GM12878 (cell line): ENCODE measurements at regions of chr11 and their contacts with region 1.

Region 1: GRCh38 chr11:61899146-61899841 is 7.9 kb upstream of the FADS3 start:
- DNase-seq: peak; percentile 40
- ATAC-seq: peak; percentile 95
- H3K4me3 ChIP-seq: no peak overlapping the region
- H3K27ac ChIP-seq: no peak overlapping the region
- H3K4me1 ChIP-seq: no peaks in the 10 kb centered on the region
- H3K27me3 ChIP-seq: peaks cover 0 to 1% of the 10 kb centered on the region in 2 experiments; a peak in 1 of 4 replicates
- CTCF ChIP-seq: peak; percentile 99 to 100 (median 99)
- EP300 ChIP-seq: no peak
- POLR2A ChIP-seq: no peak
- RAD21 ChIP-seq: peak; percentile 85

Region 2: DNA sequence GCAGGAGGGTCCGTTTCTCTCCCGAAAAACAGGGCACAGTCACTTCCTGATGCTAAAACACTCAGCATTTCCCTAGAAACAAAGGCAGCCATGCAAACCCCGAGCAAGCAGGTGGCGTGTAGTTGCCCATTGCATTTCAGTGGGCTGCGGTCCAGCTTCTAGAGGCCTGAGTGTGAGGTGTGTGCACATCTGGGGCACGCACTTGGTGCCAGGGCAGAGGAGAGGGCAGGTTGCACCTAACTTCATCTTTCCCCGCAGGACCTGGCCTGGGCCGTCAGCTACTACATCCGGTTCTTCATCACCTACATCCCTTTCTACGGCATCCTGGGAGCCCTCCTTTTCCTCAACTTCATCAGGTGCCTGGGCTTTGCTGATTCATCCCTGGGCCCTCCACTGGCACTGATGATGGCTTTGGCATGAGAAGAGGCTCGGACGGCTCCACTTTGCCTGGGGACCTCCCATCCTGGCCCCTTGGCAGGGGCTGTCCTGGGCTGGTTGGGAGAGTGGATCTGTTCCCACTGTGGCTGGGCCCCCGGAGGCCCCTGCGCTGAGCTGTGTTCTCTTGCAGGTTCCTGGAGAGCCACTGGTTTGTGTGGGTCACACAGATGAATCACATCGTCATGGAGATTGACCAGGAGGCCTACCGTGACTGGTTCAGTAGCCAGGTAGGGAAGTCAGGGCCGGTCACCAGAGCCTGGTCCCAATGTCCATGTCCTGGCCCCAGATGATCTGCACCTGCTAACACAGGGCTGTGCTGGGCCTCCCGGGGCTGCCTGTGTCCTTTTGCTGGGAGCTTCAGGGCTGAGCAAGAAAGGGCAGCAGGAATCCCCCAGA is 36.4 kb before region 1 on chr11:
- CTCF ChIA-PET with region 1: no interaction called
- POLR2A ChIA-PET with region 1: no interaction called
- RAD21 ChIA-PET with region 1: no interaction called
- SMC1A ChIA-PET with region 1: no interaction called
- in situ Hi-C with region 1: no loop called
- intact Hi-C with region 1: no loop called
- DNase-seq: no peak
- ATAC-seq: no peak
- H3K4me3 ChIP-seq: no peak overlapping the region
- H3K27ac ChIP-seq: no peak overlapping the region
- H3K4me1 ChIP-seq: no peaks in the 10 kb centered on the region
- H3K27me3 ChIP-seq: no peaks in the 10 kb centered on the region
- CTCF ChIP-seq: no peak
- EP300 ChIP-seq: no peak
- POLR2A ChIP-seq: peak; percentile 16; the same call in 1 of the 2 replicates
- RAD21 ChIP-seq: no peak

Region 3: GRCh38 chr11:61881397-61881796 is 17.9 kb before region 1 on chr11:
- CTCF ChIA-PET with region 1: interaction called, 38 read pairs
- POLR2A ChIA-PET with region 1: no interaction called
- RAD21 ChIA-PET with region 1: interaction called, 3 read pairs
- SMC1A ChIA-PET with region 1: interaction called, 3 read pairs
- in situ Hi-C with region 1: no loop called
- intact Hi-C with region 1: no loop called
- DNase-seq: no peak
- ATAC-seq: peak; percentile 43
- H3K4me3 ChIP-seq: no peak overlapping the region
- H3K27ac ChIP-seq: no peak overlapping the region
- H3K4me1 ChIP-seq: peaks cover 22% of the 10 kb centered on the region
- H3K27me3 ChIP-seq: no peaks in the 10 kb centered on the region; a peak in 1 of 4 replicates
- CTCF ChIP-seq: no peak
- EP300 ChIP-seq: no peak
- POLR2A ChIP-seq: no peak
- RAD21 ChIP-seq: no peak

Region 4: GRCh38 chr11:61935861-61936260 is 36.6 kb after region 1 on chr11:
- CTCF ChIA-PET with region 1: interaction called, 10 read pairs
- POLR2A ChIA-PET with region 1: no interaction called
- RAD21 ChIA-PET with region 1: no interaction called
- SMC1A ChIA-PET with region 1: no interaction called
- in situ Hi-C with region 1: no loop called
- intact Hi-C with region 1: no loop called
- DNase-seq: no peak
- ATAC-seq: no peak
- H3K4me3 ChIP-seq: no peak overlapping the region
- H3K27ac ChIP-seq: no peak overlapping the region
- H3K4me1 ChIP-seq: no peaks in the 10 kb centered on the region
- H3K27me3 ChIP-seq: no peaks in the 10 kb centered on the region; a peak in 2 of 4 replicates
- CTCF ChIP-seq: no peak
- EP300 ChIP-seq: no peak
- POLR2A ChIP-seq: no peak
- RAD21 ChIP-seq: no peak

Region 5: DNA sequence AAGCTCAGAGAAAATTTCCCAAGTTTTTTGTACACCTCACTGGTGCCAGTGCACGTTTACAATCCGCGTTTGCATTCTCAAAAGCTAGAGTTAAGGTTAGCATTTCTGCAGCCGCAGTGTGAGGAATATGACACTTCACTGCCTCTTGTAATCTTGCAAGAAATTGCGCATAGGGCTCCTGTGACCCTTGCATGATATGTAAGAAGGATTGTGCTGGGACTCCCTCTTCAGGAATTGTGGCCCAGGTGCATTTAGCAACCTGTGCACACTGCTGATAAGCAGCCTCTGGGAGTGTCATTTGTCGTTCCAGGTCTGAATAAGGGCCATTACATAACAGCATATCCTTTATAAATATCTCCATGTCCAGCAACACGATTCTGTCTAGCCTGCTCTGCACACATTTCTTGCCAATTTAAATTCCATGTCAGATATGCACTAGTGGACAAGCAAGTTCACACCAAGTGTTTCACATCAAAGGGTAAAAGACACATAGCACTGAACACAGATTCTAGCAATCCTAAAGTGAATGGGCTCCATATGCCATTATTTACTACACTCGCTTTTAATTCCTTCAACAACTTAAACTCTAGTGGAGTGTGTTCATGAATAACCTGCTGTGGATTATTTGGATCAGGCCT is 155.3 kb after region 1 on chr11:
- CTCF ChIA-PET with region 1: interaction called, 32 read pairs
- POLR2A ChIA-PET with region 1: no interaction called
- RAD21 ChIA-PET with region 1: interaction called, 4 read pairs
- SMC1A ChIA-PET with region 1: interaction called, 7 read pairs
- in situ Hi-C with region 1: no loop called
- intact Hi-C with region 1: loop called (anchors 1 kb)
- DNase-seq: no peak
- ATAC-seq: peak; percentile 51; the same call in 1 of the 3 replicates
- H3K4me3 ChIP-seq: no peak overlapping the region
- H3K27ac ChIP-seq: no peak overlapping the region
- H3K4me1 ChIP-seq: no peaks in the 10 kb centered on the region
- H3K27me3 ChIP-seq: no peaks in the 10 kb centered on the region
- CTCF ChIP-seq: peak; percentile 48 to 69 (median 49); a peak in 5 of 6 replicates
- EP300 ChIP-seq: no peak
- POLR2A ChIP-seq: no peak
- RAD21 ChIP-seq: peak; percentile 56

Region 6: GRCh38 chr11:62088331-62088933 is 189.1 kb after region 1 on chr11:
- CTCF ChIA-PET with region 1: interaction called, 52 read pairs
- POLR2A ChIA-PET with region 1: no interaction called
- RAD21 ChIA-PET with region 1: interaction called, 175 read pairs
- SMC1A ChIA-PET with region 1: interaction called, 168 read pairs
- in situ Hi-C with region 1: no loop called
- intact Hi-C with region 1: no loop called
- DNase-seq: no peak
- ATAC-seq: no peak
- H3K4me3 ChIP-seq: no peak overlapping the region
- H3K27ac ChIP-seq: no peak overlapping the region
- H3K4me1 ChIP-seq: no peaks in the 10 kb centered on the region
- H3K27me3 ChIP-seq: no peaks in the 10 kb centered on the region
- CTCF ChIP-seq: no peak
- EP300 ChIP-seq: no peak
- POLR2A ChIP-seq: no peak
- RAD21 ChIP-seq: no peak